Transverse colon (tissue), 4 donors: ENCODE measurements at regions of chr10 and their contacts with region 1.

Region 1: GRCh38 chr10:79068562-79069324 is at the start of gene ZMIZ1:
- DNase-seq: peak; percentile 91
- H3K4me3 ChIP-seq: peak within 1 kb of the TSS; percentile 64 to 97 (median 86)
- H3K27ac ChIP-seq: peak within 1 kb of the TSS; percentile 96 to 99 (median 98)
- H3K4me1 ChIP-seq: peaks cover 19 to 59% (median 47%) of the 10 kb centered on the region in 4 donors
- H3K27me3 ChIP-seq: no peaks in the 10 kb centered on the region
- CTCF ChIP-seq: peak in 1 of 5 experiments; percentile 17
- EP300 ChIP-seq: no peak
- POLR2A ChIP-seq: peak; percentile 57
- total RNA-seq, gene ZMIZ1: 32.0 to 108 (median 63.0) TPM

Region 2: DNA sequence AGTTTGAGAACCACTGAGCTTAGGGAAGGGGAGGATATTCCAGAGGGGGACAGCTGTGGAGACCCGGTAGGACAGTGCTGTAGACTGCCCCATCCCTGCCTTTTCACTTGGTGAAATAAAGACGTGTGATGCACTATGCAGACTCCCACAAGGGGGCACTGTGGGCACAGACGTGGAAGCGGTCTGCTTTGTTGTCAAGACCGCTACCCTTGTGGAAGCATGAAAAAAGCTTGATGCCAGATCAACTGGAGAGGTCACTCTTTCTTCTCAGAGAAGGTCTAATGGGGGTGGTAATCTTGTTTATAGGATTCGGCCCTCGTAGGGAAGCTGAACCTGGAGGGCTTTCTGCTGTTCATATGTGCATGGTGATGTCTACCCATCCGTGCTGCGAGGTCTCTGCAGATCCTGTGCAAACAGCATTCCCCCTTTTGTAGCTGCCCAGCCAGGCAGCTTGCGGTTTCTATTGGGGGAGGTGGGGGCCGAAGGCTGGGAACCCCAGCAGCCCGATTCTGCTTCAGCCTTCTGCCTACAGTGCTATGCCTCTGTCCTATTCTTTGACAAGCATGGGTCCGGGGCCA is 1021.3 kb before region 1 on chr10:
- in situ Hi-C with region 1: no loop called
- intact Hi-C with region 1: loop called (anchors 10 kb)
- DNase-seq: peak; percentile 89
- H3K4me3 ChIP-seq: no peak overlapping the region
- H3K27ac ChIP-seq: no peak overlapping the region
- H3K4me1 ChIP-seq: peaks cover 0 to 11% (median 2%) of the 10 kb centered on the region in 4 donors
- H3K27me3 ChIP-seq: no peaks in the 10 kb centered on the region
- CTCF ChIP-seq: peak; percentile 86 to 89 (median 88)
- EP300 ChIP-seq: no peak
- POLR2A ChIP-seq: no peak

Region 3: DNA sequence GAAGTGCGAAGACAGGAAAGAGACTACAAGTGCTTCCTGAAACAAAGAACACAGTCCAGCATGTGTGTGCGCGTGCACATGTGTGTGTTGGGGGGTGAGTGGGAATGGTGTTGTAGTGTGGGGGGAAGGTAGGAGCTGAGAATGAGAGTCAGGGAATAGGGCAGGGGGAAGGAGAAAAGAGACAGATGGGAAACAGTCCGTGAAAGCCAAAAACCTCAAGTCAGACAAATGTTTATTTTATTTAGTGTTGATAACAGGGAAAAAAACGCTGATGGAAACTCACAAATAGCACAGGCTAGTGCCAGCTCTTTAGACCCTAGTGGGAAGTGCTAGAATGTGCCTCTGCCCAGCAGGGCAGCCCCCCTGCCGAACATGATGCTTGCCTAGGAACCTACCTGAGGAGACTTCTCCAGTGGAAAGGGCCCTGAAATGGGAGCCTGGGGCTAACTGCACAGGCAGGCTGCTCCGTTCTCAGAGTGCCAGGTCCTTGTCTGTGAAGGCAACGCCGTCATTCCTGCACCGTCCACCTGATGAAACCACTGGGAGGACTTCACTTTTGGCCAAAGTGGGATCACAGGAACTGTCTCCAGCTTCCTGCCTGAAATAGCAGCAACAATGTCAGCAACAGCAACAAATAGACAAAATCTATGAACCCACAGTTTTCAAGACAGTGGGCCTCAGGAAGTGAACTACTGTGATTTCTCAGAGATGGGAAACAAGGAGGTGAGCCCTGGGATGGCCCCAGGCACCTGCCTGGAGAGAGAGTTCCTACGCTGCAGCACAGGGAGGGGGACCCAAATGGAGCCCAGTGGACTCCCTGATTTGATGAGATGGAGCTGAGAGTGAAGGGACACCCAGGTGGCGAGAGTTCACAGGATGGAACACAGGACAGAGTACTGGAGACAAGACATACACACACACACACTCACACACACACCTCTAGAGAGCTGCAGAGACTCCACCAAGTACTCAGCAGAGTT is 655.4 kb before region 1 on chr10:
- in situ Hi-C with region 1: no loop called
- intact Hi-C with region 1: loop called (anchors 5 kb)
- DNase-seq: no peak
- H3K4me3 ChIP-seq: no peak overlapping the region
- H3K27ac ChIP-seq: no peak overlapping the region
- H3K4me1 ChIP-seq: peaks cover 0 to 6% (median 0%) of the 10 kb centered on the region in 4 donors
- H3K27me3 ChIP-seq: no peaks in the 10 kb centered on the region
- CTCF ChIP-seq: no peak
- EP300 ChIP-seq: no peak
- POLR2A ChIP-seq: no peak

Region 4: GRCh38 chr10:78972947-78973900 is 95.5 kb before region 1 on chr10:
- in situ Hi-C with region 1: no loop called
- intact Hi-C with region 1: loop called (anchors 2 kb)
- DNase-seq: peak; percentile 79
- H3K4me3 ChIP-seq: peak overlapping the region; percentile 30 to 56 (median 48)
- H3K27ac ChIP-seq: peak overlapping the region; percentile 92 to 95 (median 94)
- H3K4me1 ChIP-seq: peaks cover 22 to 29% (median 25%) of the 10 kb centered on the region in 4 donors
- H3K27me3 ChIP-seq: no peaks in the 10 kb centered on the region
- CTCF ChIP-seq: no peak
- EP300 ChIP-seq: peak; percentile 55
- POLR2A ChIP-seq: peak; percentile 38

Region 5: GRCh38 chr10:79149662-79150443 is 81.1 kb after region 1 on chr10:
- in situ Hi-C with region 1: no loop called
- intact Hi-C with region 1: loop called (anchors 10 kb)
- DNase-seq: peak; percentile 84
- H3K4me3 ChIP-seq: no peak overlapping the region
- H3K27ac ChIP-seq: peak overlapping the region; percentile 75 to 87 (median 84)
- H3K4me1 ChIP-seq: peaks cover 62 to 82% (median 67%) of the 10 kb centered on the region in 4 donors
- H3K27me3 ChIP-seq: no peaks in the 10 kb centered on the region
- CTCF ChIP-seq: no peak
- EP300 ChIP-seq: no peak
- POLR2A ChIP-seq: peak; percentile 21

Region 6: GRCh38 chr10:79195091-79195923 is 126.6 kb after region 1 on chr10:
- in situ Hi-C with region 1: loop called in 1 of 4 experiments (anchors 10 kb)
- intact Hi-C with region 1: no loop called
- DNase-seq: peak; percentile 87
- H3K4me3 ChIP-seq: no peak overlapping the region
- H3K27ac ChIP-seq: peak overlapping the region; percentile 55 to 80 (median 73)
- H3K4me1 ChIP-seq: peaks cover 6 to 18% (median 11%) of the 10 kb centered on the region in 4 donors
- H3K27me3 ChIP-seq: no peaks in the 10 kb centered on the region
- CTCF ChIP-seq: peak; percentile 93 to 97 (median 96)
- EP300 ChIP-seq: no peak
- POLR2A ChIP-seq: no peak

Region 7: GRCh38 chr10:79331709-79332108 is 263.0 kb after region 1 on chr10:
- in situ Hi-C with region 1: no loop called
- intact Hi-C with region 1: no loop called
- DNase-seq: no peak
- H3K4me3 ChIP-seq: no peak overlapping the region
- H3K27ac ChIP-seq: no peak overlapping the region
- H3K4me1 ChIP-seq: peaks cover 0 to 12% (median 3%) of the 10 kb centered on the region in 4 donors
- H3K27me3 ChIP-seq: no peaks in the 10 kb centered on the region
- CTCF ChIP-seq: no peak
- EP300 ChIP-seq: no peak
- POLR2A ChIP-seq: no peak

Region 8: GRCh38 chr10:80136081-80136571 is 1067.4 kb after region 1 on chr10:
- in situ Hi-C with region 1: no loop called
- intact Hi-C with region 1: no loop called
- DNase-seq: no peak
- H3K4me3 ChIP-seq: no peak overlapping the region
- H3K27ac ChIP-seq: peak overlapping the region; percentile 45 to 71 (median 59)
- H3K4me1 ChIP-seq: peaks cover 0 to 9% (median 3%) of the 10 kb centered on the region in 4 donors
- H3K27me3 ChIP-seq: peaks cover 68% of the 10 kb centered on the region
- CTCF ChIP-seq: no peak
- EP300 ChIP-seq: no peak
- POLR2A ChIP-seq: no peak